Activated naive CD8-positive, alpha-beta T cell treated with anti-CD3 and anti-CD28 coated beads, Interleukin-2, amount 10 ng/mL, durations not matched to agents 7 days and 5 days (primary cell): ENCODE measurements at regions of chr1 and their contacts with region 1.

Region 1: DNA sequence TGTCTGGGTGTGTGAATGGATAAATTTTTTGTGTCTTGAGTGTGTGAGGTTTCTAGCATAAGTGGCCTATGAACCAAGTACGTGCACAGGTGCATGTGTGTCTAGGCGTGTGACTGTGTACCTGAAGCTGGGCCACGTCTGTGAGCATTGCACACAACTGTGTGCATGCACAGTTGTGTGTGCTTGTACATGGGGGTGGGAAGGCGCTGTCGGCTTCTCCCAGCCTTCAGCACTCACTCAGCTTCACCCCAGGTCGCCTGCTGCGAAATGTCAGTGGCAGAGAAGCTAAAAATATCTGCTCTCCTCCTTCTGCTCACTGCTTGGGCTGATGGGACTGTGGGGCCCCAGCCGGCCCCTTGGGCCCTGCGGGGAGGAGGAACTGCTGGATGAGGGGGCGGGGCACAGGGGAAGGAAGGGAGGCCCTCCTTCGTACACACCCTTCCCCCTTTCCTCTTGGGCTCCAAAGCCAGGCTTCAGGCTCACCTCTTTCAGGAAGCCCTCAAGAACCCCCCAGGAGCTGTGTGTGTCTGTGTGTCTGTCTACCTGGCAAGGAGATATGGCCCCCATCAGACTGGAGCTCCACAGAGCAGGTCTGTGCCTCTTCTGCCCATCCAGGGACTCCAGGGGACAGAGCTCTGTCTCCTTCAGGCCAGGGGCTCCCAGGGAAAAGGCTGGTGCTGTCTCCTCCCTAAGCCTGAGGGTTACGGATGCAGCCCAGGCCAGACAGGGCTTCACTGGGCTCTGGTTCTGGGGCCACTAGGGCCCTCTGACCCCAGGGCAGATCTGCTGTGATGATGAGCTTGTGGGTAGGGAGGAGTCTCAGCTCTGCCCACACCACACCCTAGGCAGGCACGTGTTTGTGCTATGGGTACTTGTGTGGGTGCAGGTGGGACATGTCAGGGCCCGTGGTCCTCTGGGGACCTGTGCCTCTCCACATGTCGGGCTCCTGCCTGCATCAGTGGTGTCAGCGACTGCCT is 35.6 kb upstream of the WASF2 start:
- DNase-seq: peak; percentile 78
- ATAC-seq: peak; percentile 59
- H3K4me3 Mint-ChIP-seq: peak overlapping the region; percentile 94
- H3K27ac Mint-ChIP-seq: peak overlapping the region; percentile 98
- H3K4me1 Mint-ChIP-seq: peaks cover 63% of the 10 kb centered on the region
- H3K27me3 Mint-ChIP-seq: no peaks in the 10 kb centered on the region

Region 2: DNA sequence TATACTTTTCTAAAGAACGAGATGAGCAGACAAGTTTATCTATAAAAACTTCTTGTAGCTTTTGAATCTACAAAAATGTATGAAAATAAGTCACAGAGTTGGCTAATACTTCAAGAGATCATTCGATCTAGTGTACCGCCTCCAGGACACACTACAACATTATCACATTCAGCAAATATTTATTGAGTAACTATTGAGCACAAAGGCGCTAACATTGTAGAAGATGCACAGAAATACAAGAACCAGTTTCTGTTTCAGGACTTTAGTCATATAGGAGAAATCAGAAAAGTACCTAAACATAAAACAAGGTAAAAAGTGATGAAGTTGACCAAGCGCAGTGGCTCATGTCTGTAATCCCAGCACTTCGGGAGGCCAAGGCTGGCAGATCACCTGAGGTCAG is 56.2 kb before region 1 on chr1:
- POLR2A ChIA-PET with region 1: no interaction called
- DNase-seq: no peak
- ATAC-seq: no peak
- H3K4me3 Mint-ChIP-seq: no peak overlapping the region
- H3K27ac Mint-ChIP-seq: no peak overlapping the region
- H3K4me1 Mint-ChIP-seq: peaks cover 34% of the 10 kb centered on the region
- H3K27me3 Mint-ChIP-seq: no peaks in the 10 kb centered on the region

Region 3: DNA sequence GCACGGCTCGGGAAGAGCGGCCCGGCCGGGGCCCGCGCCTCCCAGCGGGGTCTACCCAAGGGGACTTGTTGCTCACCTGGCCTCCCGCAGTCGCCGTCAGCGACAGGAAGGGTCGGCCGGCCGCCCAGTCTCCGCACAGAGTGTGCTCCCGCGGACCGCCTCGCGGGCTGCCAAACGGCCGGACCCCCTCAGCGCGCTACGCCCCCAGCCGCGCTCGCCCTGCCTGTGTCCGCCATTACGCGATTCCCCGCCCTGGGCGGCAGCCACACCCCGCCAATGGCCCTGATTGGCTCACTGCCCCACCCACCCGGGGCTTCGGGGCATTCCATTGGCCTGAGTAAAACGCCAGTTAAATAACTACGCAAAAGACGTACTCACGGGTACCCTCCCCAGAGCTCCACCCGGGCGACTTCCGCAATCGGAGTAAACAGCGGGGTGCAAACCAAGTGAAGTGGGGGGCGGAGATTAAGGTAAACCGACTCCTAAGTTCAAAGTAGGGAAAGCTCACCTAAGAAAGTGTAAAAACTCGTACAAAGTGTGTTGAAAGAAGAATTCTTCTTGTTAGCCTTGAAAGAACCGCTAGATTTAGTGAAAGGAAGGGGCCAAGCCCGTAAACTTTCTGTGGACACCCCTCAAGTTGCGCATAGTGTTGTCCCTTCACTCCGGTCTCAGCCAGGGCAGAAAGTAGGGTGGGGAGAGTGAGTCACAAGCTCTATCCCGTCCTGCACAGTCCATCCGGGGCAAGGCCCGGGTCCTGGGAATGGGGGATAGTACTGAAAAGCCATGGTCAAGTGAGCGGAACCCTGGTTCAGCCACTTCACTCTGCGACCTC is 35.5 kb before region 1 on chr1 and contains the start of gene WASF2:
- POLR2A ChIA-PET with region 1: interaction called, 60 read pairs
- DNase-seq: peak; percentile 96
- ATAC-seq: peak; percentile 96
- H3K4me3 Mint-ChIP-seq: peak within 1 kb of the TSS; percentile 88
- H3K27ac Mint-ChIP-seq: peak within 1 kb of the TSS; percentile 98
- H3K4me1 Mint-ChIP-seq: peaks cover 19% of the 10 kb centered on the region
- H3K27me3 Mint-ChIP-seq: no peaks in the 10 kb centered on the region
- total RNA-seq, gene WASF2: 139 to 148 TPM

Region 4: DNA sequence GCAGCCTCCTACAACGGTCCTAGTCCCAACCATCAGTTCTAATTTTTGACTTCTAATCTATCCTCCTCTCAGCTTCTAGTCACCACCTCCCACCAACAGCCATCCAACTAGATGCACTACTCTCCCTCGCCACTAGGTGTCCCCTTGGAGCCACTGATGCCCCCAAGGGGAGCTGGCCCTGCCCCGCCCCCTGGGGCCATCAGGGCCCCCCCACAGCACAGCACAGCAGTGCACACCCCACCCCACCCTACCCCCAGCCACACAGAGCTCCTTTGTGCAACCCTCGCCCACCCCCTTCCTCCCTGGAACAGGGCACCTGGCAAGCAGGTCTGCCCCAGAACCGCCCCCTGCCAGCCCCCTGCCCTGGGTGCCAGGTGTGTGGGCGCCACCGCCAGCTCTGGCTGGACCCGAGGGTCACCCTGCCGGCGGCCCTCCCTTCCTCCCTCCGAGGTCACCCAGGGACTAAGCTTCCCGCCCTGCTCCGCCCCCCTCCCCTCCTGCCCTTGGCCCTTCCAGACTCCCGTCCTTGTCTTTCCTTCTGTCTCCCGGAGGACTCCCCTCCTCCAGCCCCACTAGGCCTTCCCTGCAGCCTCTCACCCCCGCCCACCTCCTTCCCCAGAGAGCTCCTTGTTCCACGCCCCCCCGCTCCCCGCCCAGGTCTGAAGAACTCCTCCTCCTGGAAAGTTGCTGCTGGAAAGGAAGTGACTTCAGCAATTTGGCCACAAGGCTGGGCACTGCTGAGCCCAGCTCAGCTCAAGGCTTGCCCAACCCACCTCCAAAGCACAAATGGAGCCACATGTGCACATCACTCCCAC is 31.4 kb after region 1 on chr1:
- POLR2A ChIA-PET with region 1: interaction called, 14 read pairs
- DNase-seq: peak; percentile 75
- ATAC-seq: peak; percentile 53
- H3K4me3 Mint-ChIP-seq: peak overlapping the region; percentile 46
- H3K27ac Mint-ChIP-seq: peak overlapping the region; percentile 85
- H3K4me1 Mint-ChIP-seq: peaks cover 32% of the 10 kb centered on the region
- H3K27me3 Mint-ChIP-seq: no peaks in the 10 kb centered on the region

Region 5: GRCh38 chr1:27603681-27604578 is 78.3 kb after region 1 on chr1 and contains the start of gene AHDC1:
- POLR2A ChIA-PET with region 1: interaction called, 16 read pairs
- DNase-seq: peak; percentile 95
- ATAC-seq: peak; percentile 79
- H3K4me3 Mint-ChIP-seq: peak within 1 kb of the TSS; percentile 96
- H3K27ac Mint-ChIP-seq: peak within 1 kb of the TSS; percentile 89
- H3K4me1 Mint-ChIP-seq: peaks cover 34% of the 10 kb centered on the region
- H3K27me3 Mint-ChIP-seq: no peaks in the 10 kb centered on the region
- total RNA-seq, gene AHDC1: 21.6 to 22.2 TPM